ENCODE measurements at regions of chr16 and their contacts with region 1.

Region 1: DNA sequence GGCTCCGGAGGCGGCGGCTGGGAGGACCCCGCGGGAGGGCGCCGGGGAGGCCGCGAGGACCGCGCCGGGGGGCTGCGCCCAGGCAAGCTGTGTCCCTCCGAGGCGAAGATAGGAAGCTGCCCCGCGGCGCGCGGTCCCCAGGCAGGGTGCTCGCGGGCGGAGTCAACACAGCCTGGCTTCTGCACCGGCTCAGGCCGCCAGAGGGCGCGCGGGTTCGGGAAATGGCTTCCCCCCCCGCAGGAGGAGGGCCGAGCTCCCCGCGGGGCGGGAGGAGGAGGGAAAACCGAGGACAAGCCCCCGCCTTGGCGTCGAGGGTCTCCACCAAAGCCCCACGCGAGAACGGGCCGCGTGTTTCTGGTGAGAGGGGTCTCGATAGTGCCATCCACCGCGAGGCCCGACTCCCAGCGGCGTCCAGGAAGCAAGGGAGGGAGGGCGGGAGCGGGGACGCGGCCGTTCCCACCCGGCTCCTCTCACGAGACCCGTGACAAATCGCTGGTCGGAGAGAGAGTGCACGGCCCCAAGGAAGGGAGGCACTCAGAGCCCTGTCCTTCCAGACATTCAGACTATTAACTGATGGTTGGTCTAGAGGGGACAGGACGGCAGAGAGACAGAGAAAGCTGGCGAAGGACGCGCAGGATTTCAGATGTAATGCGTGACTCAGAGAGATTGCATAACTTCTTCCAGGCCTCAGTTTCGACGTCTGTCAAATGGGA is 64.4 kb upstream of the DNAJA2 start:
- DNase-seq: peak; percentile 47
- H3K4me3 ChIP-seq: peak overlapping the region; percentile 51 to 78 (median 68)
- H3K27ac ChIP-seq: peak overlapping the region; percentile 52 to 71 (median 55)
- H3K4me1 ChIP-seq: peaks cover 0 to 13% (median 6%) of the 10 kb centered on the region in 3 donors
- H3K27me3 ChIP-seq: no peaks in the 10 kb centered on the region
- CTCF ChIP-seq: peak; percentile 84 to 94 (median 88)
- POLR2A ChIP-seq: no peak

Region 2: DNA sequence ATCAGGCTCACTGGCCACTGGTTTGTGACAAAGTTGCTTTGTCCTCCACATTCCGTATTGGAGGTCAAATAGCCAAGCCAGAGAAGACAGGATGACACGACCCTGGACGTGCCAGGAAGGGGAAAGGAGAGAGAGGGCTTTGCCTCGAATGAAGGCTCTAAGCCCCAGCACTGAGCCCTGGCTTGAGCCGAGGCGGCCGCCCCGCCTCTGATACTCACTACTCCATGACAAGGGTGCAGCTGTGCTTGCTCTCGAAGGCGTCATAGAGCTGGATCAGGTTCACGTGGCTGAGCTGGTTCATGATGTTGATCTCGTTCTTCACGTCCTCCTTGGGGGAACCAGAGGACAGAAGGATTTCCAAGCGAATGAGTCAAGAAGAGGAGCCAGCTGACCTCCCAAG is 309.1 kb before region 1 on chr16:
- intact Hi-C with region 1: no loop called
- DNase-seq: no peak
- H3K4me3 ChIP-seq: no peak overlapping the region
- H3K27ac ChIP-seq: no peak overlapping the region
- H3K4me1 ChIP-seq: no peaks in the 10 kb centered on the region
- H3K27me3 ChIP-seq: no peaks in the 10 kb centered on the region
- CTCF ChIP-seq: no peak
- POLR2A ChIP-seq: no peak

Region 3: GRCh38 chr16:48156790-48157209 is 1118.9 kb after region 1 on chr16:
- intact Hi-C with region 1: loop called (anchors 10 kb)
- DNase-seq: peak; percentile 31
- H3K4me3 ChIP-seq: no peak overlapping the region
- H3K27ac ChIP-seq: no peak overlapping the region
- H3K4me1 ChIP-seq: peaks cover 3 to 6% (median 4%) of the 10 kb centered on the region in 3 donors
- H3K27me3 ChIP-seq: peaks cover 0 to 40% (median 0%) of the 10 kb centered on the region in 4 donors
- CTCF ChIP-seq: peak; percentile 80 to 94 (median 86)
- POLR2A ChIP-seq: no peak

Measured in esophagus squamous epithelium (tissue), 5 donors.